Activated B cell treated with CpG ODN at 0.5 μM for 24 hours (primary cell): ENCODE measurements at regions of chr7 and their contacts with region 1.

Region 1: GRCh38 chr7:142711746-142712619 is 37.3 kb upstream of the PRSS1 start:
- DNase-seq: no peak
- ATAC-seq: peak; percentile 25
- H3K4me3 Mint-ChIP-seq: peak overlapping the region; percentile 63
- H3K27ac Mint-ChIP-seq: no peak overlapping the region
- H3K4me1 Mint-ChIP-seq: peaks cover 27% of the 10 kb centered on the region
- H3K27me3 Mint-ChIP-seq: no peaks in the 10 kb centered on the region
- CTCF ChIP-seq: no peak

Region 2: DNA sequence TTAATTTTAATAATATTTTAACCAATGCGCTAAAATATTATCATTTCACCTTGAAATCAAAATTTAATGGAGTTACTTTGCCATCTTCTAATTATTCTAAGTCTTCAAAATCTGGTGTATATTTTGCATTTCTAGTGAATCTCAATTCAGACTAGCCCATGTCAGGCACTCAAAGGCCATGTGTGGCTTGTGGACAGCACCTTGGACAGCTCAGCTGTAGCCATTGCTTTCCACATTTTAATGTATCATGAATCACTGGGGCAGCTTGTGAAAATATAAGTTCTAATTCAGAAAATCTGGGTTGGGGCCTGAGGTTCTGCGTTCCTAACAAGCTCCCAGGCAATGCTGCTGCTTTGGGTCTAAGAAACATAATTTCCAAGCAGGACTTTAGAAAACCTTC is 543.2 kb before region 1 on chr7:
- CTCF ChIA-PET with region 1: no interaction called
- POLR2A ChIA-PET with region 1: no interaction called
- intact Hi-C with region 1: no loop called
- DNase-seq: no peak
- ATAC-seq: no peak
- H3K4me3 Mint-ChIP-seq: no peak overlapping the region
- H3K27ac Mint-ChIP-seq: no peak overlapping the region
- H3K4me1 Mint-ChIP-seq: no peaks in the 10 kb centered on the region
- H3K27me3 Mint-ChIP-seq: peaks cover 1% of the 10 kb centered on the region
- CTCF ChIP-seq: no peak

Region 3: DNA sequence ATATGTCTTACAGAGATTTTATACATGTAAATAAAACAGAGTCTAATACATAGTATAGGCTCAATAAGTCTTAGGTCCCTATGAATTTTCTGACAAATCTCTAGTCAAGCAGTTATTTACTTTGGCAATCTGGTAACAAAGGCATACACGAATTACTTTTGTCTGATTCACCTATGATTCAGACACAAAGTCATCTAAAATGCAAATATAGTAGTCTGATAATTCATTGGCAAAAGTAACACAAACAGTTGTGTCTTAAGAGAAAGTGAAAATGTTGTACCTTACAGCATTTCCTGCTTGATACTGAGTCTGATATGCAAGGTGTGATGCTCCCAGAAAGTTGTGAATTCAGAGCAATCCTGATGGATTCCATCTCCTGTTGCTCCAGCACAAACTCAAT is 172.1 kb before region 1 on chr7:
- CTCF ChIA-PET with region 1: no interaction called
- POLR2A ChIA-PET with region 1: no interaction called
- intact Hi-C with region 1: no loop called
- DNase-seq: no peak
- ATAC-seq: no peak
- H3K4me3 Mint-ChIP-seq: no peak overlapping the region
- H3K27ac Mint-ChIP-seq: no peak overlapping the region
- H3K4me1 Mint-ChIP-seq: peaks cover 11% of the 10 kb centered on the region
- H3K27me3 Mint-ChIP-seq: peaks cover 7% of the 10 kb centered on the region
- CTCF ChIP-seq: no peak

Region 4: GRCh38 chr7:142646386-142647140 is 65.4 kb before region 1 on chr7:
- CTCF ChIA-PET with region 1: no interaction called
- POLR2A ChIA-PET with region 1: no interaction called
- intact Hi-C with region 1: loop called (anchors 5 kb)
- DNase-seq: no peak
- ATAC-seq: peak; percentile 28
- H3K4me3 Mint-ChIP-seq: peak overlapping the region; percentile 36
- H3K27ac Mint-ChIP-seq: no peak overlapping the region
- H3K4me1 Mint-ChIP-seq: peaks cover 13% of the 10 kb centered on the region
- H3K27me3 Mint-ChIP-seq: peaks cover 52% of the 10 kb centered on the region
- CTCF ChIP-seq: no peak

Region 5: GRCh38 chr7:142669074-142669654 is 42.8 kb before region 1 on chr7:
- CTCF ChIA-PET with region 1: interaction called, 5 read pairs
- POLR2A ChIA-PET with region 1: no interaction called
- intact Hi-C with region 1: loop called (anchors 1 kb)
- DNase-seq: no peak
- ATAC-seq: peak; percentile 28
- H3K4me3 Mint-ChIP-seq: peak overlapping the region; percentile 13
- H3K27ac Mint-ChIP-seq: no peak overlapping the region
- H3K4me1 Mint-ChIP-seq: peaks cover 30% of the 10 kb centered on the region
- H3K27me3 Mint-ChIP-seq: no peaks in the 10 kb centered on the region
- CTCF ChIP-seq: no peak

Region 6: GRCh38 chr7:142739923-142740492 is 28.0 kb after region 1 on chr7:
- CTCF ChIA-PET with region 1: interaction called, 3 read pairs
- POLR2A ChIA-PET with region 1: no interaction called
- intact Hi-C with region 1: loop called (anchors 1 kb)
- DNase-seq: no peak
- ATAC-seq: peak; percentile 96
- H3K4me3 Mint-ChIP-seq: peak overlapping the region; percentile 6
- H3K27ac Mint-ChIP-seq: peak overlapping the region; percentile 18
- H3K4me1 Mint-ChIP-seq: peaks cover 41% of the 10 kb centered on the region
- H3K27me3 Mint-ChIP-seq: no peaks in the 10 kb centered on the region
- CTCF ChIP-seq: no peak

Region 7: DNA sequence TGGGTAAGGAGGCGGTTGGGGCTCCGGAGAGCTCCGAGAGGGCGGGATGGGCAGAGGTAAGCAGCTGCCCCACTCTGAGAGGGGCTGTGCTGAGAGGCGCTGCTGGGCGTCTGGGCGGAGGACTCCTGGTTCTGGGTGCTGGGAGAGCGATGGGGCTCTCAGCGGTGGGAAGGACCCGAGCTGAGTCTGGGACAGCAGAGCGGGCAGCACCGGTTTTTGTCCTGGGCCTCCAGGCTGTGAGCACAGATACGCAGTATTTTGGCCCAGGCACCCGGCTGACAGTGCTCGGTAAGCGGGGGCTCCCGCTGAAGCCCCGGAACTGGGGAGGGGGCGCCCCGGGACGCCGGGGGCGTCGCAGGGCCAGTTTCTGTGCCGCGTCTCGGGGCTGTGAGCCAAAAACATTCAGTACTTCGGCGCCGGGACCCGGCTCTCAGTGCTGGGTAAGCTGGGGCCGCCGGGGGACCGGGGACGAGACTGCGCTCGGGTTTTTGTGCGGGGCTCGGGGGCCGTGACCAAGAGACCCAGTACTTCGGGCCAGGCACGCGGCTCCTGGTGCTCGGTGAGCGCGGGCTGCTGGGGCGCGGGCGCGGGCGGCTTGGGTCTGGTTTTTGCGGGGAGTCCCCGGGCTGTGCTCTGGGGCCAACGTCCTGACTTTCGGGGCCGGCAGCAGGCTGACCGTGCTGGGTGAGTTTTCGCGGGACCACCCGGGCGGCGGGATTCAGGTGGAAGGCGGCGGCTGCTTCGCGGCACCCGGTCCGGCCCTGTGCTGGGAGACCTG is 84.8 kb after region 1 on chr7:
- CTCF ChIA-PET with region 1: interaction called, 7 read pairs
- POLR2A ChIA-PET with region 1: interaction called, 13 read pairs
- intact Hi-C with region 1: no loop called
- DNase-seq: peak; percentile 47
- ATAC-seq: peak; percentile 44
- H3K4me3 Mint-ChIP-seq: peak overlapping the region; percentile 97
- H3K27ac Mint-ChIP-seq: peak overlapping the region; percentile 99
- H3K4me1 Mint-ChIP-seq: peaks cover 83% of the 10 kb centered on the region
- H3K27me3 Mint-ChIP-seq: no peaks in the 10 kb centered on the region
- CTCF ChIP-seq: no peak

Region 8: GRCh38 chr7:142866361-142867058 is 154.5 kb after region 1 on chr7:
- CTCF ChIA-PET with region 1: interaction called, 11 read pairs
- POLR2A ChIA-PET with region 1: no interaction called
- intact Hi-C with region 1: no loop called
- DNase-seq: no peak
- ATAC-seq: peak; percentile 34
- H3K4me3 Mint-ChIP-seq: no peak overlapping the region
- H3K27ac Mint-ChIP-seq: no peak overlapping the region
- H3K4me1 Mint-ChIP-seq: no peaks in the 10 kb centered on the region
- H3K27me3 Mint-ChIP-seq: no peaks in the 10 kb centered on the region
- CTCF ChIP-seq: no peak

Region 9: GRCh38 chr7:142968229-142968628 is 256.2 kb after region 1 on chr7:
- CTCF ChIA-PET with region 1: no interaction called
- POLR2A ChIA-PET with region 1: no interaction called
- intact Hi-C with region 1: no loop called
- DNase-seq: no peak
- ATAC-seq: no peak
- H3K4me3 Mint-ChIP-seq: no peak overlapping the region
- H3K27ac Mint-ChIP-seq: no peak overlapping the region
- H3K4me1 Mint-ChIP-seq: no peaks in the 10 kb centered on the region
- H3K27me3 Mint-ChIP-seq: peaks cover 24% of the 10 kb centered on the region
- CTCF ChIP-seq: no peak

Region 10: GRCh38 chr7:143042159-143042789 is 330.3 kb after region 1 on chr7:
- CTCF ChIA-PET with region 1: no interaction called
- POLR2A ChIA-PET with region 1: no interaction called
- intact Hi-C with region 1: no loop called
- DNase-seq: no peak
- ATAC-seq: no peak
- H3K4me3 Mint-ChIP-seq: no peak overlapping the region
- H3K27ac Mint-ChIP-seq: no peak overlapping the region
- H3K4me1 Mint-ChIP-seq: peaks cover 23% of the 10 kb centered on the region
- H3K27me3 Mint-ChIP-seq: no peaks in the 10 kb centered on the region
- CTCF ChIP-seq: no peak